Activated naive CD8-positive, alpha-beta T cell treated with anti-CD3 and anti-CD28 coated beads, Interleukin-2, amount 10 ng/mL, durations not matched to agents 7 days and 5 days (primary cell): ENCODE measurements at regions of chr4 and their contacts with region 1.

Region 1: DNA sequence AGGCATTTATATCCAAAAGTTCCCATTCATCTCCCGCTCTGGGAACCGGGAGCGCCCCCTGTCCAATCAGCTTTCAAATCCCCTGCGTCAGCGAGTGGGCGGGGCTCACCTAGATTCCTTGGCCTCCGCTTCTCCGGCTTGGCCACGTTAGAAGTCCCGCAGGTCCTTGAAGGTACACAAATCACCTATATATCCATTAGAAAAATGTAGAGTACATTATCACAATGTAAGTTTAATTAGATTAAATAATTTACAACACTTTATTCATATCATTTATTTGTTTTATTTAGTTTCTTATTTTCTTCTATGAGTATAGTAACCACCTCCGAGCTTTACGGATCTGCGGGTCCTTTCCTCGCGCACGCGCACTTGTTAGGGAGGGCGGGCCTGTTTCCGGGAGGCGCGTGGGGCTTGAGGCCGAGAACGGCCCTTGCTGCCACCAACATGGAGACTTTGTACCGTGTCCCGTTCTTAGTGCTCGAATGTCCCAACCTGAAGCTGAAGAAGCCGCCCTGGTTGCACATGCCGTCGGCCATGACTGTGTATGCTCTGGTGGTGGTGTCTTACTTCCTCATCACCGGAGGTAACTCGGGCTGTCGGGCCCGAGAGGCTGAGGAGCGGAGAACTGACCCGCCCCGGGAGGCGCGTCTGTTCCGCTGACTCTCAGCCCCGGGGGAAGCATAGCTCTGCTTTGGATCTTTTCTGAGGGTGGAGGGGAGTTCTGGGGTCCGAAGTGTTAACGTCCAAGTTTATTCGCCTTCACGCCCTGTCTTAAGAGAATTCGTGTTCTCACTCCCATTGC is at the start of gene OSTC:
- DNase-seq: peak; percentile 93
- ATAC-seq: peak; percentile 91
- H3K4me3 Mint-ChIP-seq: peak within 1 kb of the TSS; percentile 87
- H3K27ac Mint-ChIP-seq: peak within 1 kb of the TSS; percentile 78
- H3K4me1 Mint-ChIP-seq: peaks cover 18% of the 10 kb centered on the region
- H3K27me3 Mint-ChIP-seq: no peaks in the 10 kb centered on the region
- total RNA-seq, gene OSTC: 55.0 to 58.4 TPM

Region 2: GRCh38 chr4:108181704-108182103 is 468.7 kb before region 1 on chr4:
- POLR2A ChIA-PET with region 1: no interaction called
- DNase-seq: no peak
- ATAC-seq: no peak
- H3K4me3 Mint-ChIP-seq: no peak overlapping the region
- H3K27ac Mint-ChIP-seq: no peak overlapping the region
- H3K4me1 Mint-ChIP-seq: peaks cover 8% of the 10 kb centered on the region
- H3K27me3 Mint-ChIP-seq: peaks cover 4% of the 10 kb centered on the region

Region 3: GRCh38 chr4:108620101-108620932 is 30.1 kb before region 1 on chr4 and contains the start of gene RPL34:
- POLR2A ChIA-PET with region 1: interaction called, 15 read pairs
- DNase-seq: peak; percentile 88
- ATAC-seq: peak; percentile 99
- H3K4me3 Mint-ChIP-seq: peak within 1 kb of the TSS; percentile 93
- H3K27ac Mint-ChIP-seq: peak within 1 kb of the TSS; percentile 95
- H3K4me1 Mint-ChIP-seq: peaks cover 35% of the 10 kb centered on the region
- H3K27me3 Mint-ChIP-seq: no peaks in the 10 kb centered on the region
- total RNA-seq, gene RPL34: 1,432 to 1,506 TPM

Region 4: GRCh38 chr4:108662629-108663028 is 12.2 kb after region 1 on chr4:
- POLR2A ChIA-PET with region 1: no interaction called
- DNase-seq: no peak
- ATAC-seq: no peak
- H3K4me3 Mint-ChIP-seq: no peak overlapping the region
- H3K27ac Mint-ChIP-seq: no peak overlapping the region
- H3K4me1 Mint-ChIP-seq: no peaks in the 10 kb centered on the region
- H3K27me3 Mint-ChIP-seq: no peaks in the 10 kb centered on the region

Region 5: GRCh38 chr4:108885211-108885610 is 234.8 kb after region 1 on chr4:
- POLR2A ChIA-PET with region 1: no interaction called
- DNase-seq: no peak
- ATAC-seq: no peak
- H3K4me3 Mint-ChIP-seq: no peak overlapping the region
- H3K27ac Mint-ChIP-seq: no peak overlapping the region
- H3K4me1 Mint-ChIP-seq: peaks cover 4% of the 10 kb centered on the region
- H3K27me3 Mint-ChIP-seq: peaks cover 6% of the 10 kb centered on the region